Endothelial cell of umbilical vein (primary cell): ENCODE measurements at regions of chr19 and their contacts with region 1.

Region 1: DNA sequence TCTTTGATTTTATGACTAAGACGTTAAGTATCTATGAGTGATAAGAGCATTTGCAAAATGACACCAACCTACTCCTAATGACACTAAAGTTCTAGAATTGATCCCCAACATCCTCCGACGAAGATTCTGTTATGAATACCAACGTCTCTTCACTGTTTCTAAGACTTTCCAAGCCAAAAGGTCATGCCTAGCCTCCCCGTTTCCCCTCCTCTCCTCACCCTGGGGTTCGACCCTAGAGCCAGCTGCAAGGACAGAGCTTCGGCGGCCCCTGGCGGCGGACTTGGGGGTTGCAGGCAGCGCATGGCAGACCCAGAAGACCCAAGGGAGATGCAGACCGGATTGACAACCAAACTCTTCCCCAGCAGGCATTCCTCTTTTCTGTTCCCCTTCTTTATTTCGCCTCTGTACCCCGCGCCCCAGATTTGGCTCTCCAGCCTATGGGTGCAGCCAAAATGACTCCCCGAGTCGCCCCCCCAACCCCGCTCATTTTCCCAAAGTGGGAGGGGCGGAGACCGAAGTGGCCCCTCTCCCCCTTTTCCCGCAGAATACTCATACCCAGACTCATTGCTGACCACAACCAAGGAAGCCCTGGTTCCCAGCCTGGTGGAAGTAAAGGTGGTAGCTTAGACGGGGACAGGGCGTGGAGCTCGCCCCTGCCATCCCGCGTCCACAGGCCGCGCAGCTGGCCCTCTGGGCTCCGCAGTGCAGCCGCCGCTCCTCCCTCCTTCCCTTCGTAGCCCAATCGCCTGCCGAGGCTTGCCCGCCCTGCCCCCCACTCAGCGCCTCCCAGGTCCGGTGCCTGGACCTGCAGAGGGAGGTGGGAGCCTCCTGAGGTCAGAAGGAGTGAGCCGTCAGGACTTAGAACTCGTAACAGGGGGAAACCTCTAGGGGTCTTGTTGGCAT is 4.1 kb upstream of the EML2 start:
- DNase-seq: peak; percentile 85
- H3K4me3 ChIP-seq: peak overlapping the region in 1 of 3 experiments; percentile 13
- H3K27ac ChIP-seq: peak overlapping the region; percentile 9
- H3K4me1 ChIP-seq: peaks cover 42% of the 10 kb centered on the region
- H3K27me3 ChIP-seq: no peaks in the 10 kb centered on the region
- CTCF ChIP-seq: peak; percentile 98 to 99
- POLR2A ChIP-seq: no peak

Region 2: DNA sequence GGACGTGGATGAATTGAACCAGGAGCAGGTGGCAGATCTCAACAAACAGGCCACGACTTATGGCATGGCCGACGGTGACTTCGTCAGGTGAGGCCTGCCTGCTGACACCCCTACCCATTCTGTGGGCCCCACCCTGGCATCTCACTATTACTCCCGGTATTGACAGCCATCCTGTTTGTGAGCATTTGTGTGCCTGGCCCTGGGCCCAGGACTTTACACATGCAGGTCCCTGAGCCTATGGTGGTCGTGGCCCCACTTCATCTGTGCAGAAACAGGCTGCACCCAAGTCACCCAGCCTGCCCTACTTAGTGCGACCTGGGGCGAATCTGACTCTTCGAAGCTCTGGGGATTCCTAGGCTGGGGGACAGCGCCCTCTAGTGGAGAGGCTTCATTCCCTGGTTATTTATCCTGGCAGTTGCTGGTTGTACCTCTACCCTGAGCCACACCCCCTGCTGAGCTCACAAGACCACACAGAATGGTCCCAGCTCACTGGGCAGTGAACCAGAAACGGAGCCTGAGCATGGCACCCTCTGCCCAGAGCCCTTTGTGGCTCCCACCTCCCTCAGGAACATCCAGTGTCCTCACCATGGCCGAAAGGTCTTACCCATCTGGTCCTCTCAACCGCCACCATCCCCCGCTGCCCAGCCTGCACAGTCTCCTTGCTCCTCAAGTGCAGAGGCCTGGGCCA is 583.9 kb before region 1 on chr19:
- CTCF ChIA-PET with region 1: no interaction called
- POLR2A ChIA-PET with region 1: no interaction called
- dilution Hi-C with region 1: no loop called
- intact Hi-C with region 1: no loop called
- DNase-seq: peak; percentile 75
- H3K4me3 ChIP-seq: no peak overlapping the region
- H3K27ac ChIP-seq: no peak overlapping the region
- H3K4me1 ChIP-seq: no peaks in the 10 kb centered on the region
- H3K27me3 ChIP-seq: no peaks in the 10 kb centered on the region
- CTCF ChIP-seq: peak; percentile 80 to 84
- POLR2A ChIP-seq: peak; percentile 31

Region 3: DNA sequence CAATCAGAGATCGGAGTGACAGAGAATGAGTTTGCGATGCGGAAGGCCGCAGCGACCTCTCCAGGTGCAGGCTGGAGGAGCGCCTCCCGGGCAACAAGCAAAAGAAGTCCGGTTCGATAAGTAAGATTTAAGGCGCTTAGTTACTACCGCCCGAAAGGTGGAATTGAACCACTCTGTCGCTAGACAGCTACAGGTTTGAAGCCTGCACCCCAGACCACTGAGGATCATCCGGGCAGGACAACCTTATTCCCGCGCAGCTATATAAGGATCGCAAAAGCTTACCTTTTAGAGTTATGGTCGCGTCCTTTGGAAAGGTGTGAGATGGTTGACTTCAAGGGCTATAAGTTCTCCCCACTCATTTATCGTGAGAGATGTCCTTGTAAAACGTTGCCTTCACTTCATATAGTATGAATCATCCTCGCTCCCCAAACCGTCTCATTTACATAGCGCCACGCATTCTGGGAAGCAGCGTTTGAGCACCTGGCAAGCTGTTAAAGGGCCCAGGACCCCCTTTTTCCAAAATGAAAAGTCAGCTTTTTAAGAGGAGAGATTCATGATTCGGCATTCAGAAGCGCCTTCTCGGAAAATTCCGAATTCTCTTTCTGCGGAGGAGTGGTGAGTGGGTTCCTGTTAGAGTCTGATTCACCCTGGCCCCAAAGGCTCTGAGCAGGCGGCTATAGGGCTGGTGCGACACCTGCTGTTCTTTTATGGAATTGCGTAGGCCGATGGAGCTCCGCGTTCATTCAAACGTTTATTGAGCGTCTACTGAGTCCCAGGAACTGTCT is 164.6 kb before region 1 on chr19:
- CTCF ChIA-PET with region 1: interaction called, 34 read pairs
- POLR2A ChIA-PET with region 1: no interaction called
- dilution Hi-C with region 1: no loop called
- intact Hi-C with region 1: no loop called
- DNase-seq: peak; percentile 92
- H3K4me3 ChIP-seq: peak overlapping the region; percentile 13 to 71 (median 46)
- H3K27ac ChIP-seq: peak overlapping the region; percentile 96
- H3K4me1 ChIP-seq: peaks cover 3% of the 10 kb centered on the region
- H3K27me3 ChIP-seq: no peaks in the 10 kb centered on the region
- CTCF ChIP-seq: peak; percentile 91 to 95
- POLR2A ChIP-seq: no peak

Region 4: GRCh38 chr19:45515081-45515624 is 128.1 kb before region 1 on chr19:
- CTCF ChIA-PET with region 1: interaction called, 13 read pairs
- POLR2A ChIA-PET with region 1: no interaction called
- dilution Hi-C with region 1: no loop called
- intact Hi-C with region 1: no loop called
- DNase-seq: no peak
- H3K4me3 ChIP-seq: no peak overlapping the region
- H3K27ac ChIP-seq: peak overlapping the region; percentile 23
- H3K4me1 ChIP-seq: peaks cover 24% of the 10 kb centered on the region
- H3K27me3 ChIP-seq: no peaks in the 10 kb centered on the region
- CTCF ChIP-seq: no peak
- POLR2A ChIP-seq: no peak

Region 5: DNA sequence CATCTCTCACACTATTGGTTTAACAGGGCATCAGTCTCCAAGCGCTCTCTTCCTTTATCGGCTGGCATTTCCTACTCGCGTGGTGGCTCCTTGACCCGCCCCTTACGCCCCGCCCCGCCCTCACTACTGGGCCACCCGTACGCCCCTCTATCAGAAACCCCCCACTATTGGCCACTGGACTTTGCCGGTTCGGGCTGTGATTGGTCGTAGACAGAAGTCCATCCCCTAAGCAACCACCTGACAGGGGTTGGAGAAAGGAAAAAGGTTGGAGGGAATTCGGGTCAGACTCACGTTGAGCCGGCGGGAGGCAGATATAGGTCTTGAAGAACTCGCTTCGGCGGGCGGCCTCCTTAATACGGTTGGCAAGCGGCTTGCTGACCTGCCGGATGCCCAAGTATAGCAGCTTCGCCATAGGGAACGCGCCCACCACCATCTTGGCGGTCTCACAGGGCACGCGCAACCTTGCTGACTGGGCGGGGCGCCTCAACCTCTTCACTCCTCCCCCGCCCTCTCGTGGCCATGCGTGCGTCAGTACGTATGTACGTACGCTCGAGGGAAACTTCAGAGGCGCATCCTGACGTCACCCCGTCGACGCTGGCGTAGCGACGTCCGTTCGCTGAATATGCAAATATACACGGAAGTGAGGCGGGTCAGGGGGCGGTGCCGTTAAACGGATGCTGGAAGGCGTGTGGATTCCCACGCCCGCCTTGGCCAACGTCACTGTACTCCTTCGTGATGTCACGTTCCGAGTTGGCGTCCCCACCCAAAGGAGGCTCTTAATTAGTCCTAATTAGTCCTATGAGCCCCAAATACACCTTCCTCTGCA is 58.7 kb before region 1 on chr19 and contains the start of gene OPA3:
- CTCF ChIA-PET with region 1: interaction called, 20 read pairs
- POLR2A ChIA-PET with region 1: interaction called, 3 read pairs
- dilution Hi-C with region 1: no loop called
- intact Hi-C with region 1: loop called (anchors 2 kb)
- DNase-seq: peak; percentile 100
- H3K4me3 ChIP-seq: peak within 1 kb of the TSS; percentile 56 to 90 (median 67)
- H3K27ac ChIP-seq: peak within 1 kb of the TSS; percentile 85
- H3K4me1 ChIP-seq: peaks cover 20% of the 10 kb centered on the region
- H3K27me3 ChIP-seq: no peaks in the 10 kb centered on the region
- CTCF ChIP-seq: no peak
- POLR2A ChIP-seq: peak; percentile 90
- total RNA-seq, gene OPA3: 13.8 and 15.4 TPM in 2 replicates

Region 6: GRCh38 chr19:45615795-45616708 is 27.2 kb before region 1 on chr19:
- CTCF ChIA-PET with region 1: interaction called, 91 read pairs
- POLR2A ChIA-PET with region 1: interaction called, 5 read pairs
- dilution Hi-C with region 1: no loop called
- intact Hi-C with region 1: loop called (anchors 1 kb)
- DNase-seq: peak; percentile 99
- H3K4me3 ChIP-seq: peak overlapping the region; percentile 37 to 61 (median 52)
- H3K27ac ChIP-seq: peak overlapping the region; percentile 72
- H3K4me1 ChIP-seq: peaks cover 17% of the 10 kb centered on the region
- H3K27me3 ChIP-seq: no peaks in the 10 kb centered on the region
- CTCF ChIP-seq: no peak
- POLR2A ChIP-seq: peak; percentile 66

Region 7: DNA sequence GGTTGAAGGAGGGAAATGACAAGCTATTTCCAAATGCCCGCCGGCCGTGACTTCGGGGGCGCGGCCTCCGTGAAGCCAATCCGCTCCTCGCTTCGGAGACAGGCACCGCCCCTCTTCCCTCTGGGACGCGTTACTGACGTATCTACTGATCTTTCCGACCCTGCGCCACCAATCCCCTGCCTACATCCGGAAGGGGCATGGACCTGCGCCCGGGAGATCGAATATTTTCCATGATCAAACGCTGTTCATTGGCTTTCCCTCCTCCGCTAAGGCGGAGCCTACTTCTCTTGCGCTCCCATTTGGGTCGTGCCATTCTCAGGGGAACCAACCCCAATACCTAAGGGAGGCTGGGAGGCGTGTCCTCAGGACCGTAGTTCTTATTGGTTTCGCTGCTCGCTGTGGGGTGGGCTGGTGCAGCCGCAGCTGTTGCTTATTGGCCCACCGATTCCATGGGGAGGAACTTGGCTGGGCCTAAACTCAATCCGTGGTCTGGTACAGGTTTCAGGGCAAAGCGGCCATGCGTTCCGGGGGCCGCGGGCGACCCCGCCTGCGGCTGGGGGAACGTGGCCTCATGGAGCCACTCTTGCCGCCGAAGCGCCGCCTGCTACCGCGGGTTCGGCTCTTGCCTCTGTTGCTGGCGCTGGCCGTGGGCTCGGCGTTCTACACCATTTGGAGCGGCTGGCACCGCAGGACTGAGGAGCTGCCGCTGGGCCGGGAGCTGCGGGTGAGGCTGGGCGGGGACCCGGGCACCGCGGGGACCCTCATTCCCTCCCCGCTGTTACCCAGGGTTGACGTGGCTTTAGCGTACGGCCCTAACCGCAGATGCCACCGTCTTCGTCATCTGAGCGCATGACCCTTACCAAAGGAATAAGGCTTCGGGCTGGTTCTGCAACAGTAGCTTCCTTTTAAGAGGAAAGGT is 49.2 kb after region 1 on chr19 and contains the start of gene QPCTL:
- CTCF ChIA-PET with region 1: interaction called, 3 read pairs
- POLR2A ChIA-PET with region 1: no interaction called
- dilution Hi-C with region 1: no loop called
- intact Hi-C with region 1: loop called (anchors 5 kb)
- DNase-seq: peak; percentile 100
- H3K4me3 ChIP-seq: peak within 1 kb of the TSS; percentile 70 to 93 (median 85)
- H3K27ac ChIP-seq: peak within 1 kb of the TSS; percentile 82
- H3K4me1 ChIP-seq: peaks cover 9% of the 10 kb centered on the region
- H3K27me3 ChIP-seq: no peaks in the 10 kb centered on the region
- CTCF ChIP-seq: no peak
- POLR2A ChIP-seq: peak; percentile 76
- total RNA-seq, gene QPCTL: 15.3 and 17.6 TPM in 2 replicates

Region 8: DNA sequence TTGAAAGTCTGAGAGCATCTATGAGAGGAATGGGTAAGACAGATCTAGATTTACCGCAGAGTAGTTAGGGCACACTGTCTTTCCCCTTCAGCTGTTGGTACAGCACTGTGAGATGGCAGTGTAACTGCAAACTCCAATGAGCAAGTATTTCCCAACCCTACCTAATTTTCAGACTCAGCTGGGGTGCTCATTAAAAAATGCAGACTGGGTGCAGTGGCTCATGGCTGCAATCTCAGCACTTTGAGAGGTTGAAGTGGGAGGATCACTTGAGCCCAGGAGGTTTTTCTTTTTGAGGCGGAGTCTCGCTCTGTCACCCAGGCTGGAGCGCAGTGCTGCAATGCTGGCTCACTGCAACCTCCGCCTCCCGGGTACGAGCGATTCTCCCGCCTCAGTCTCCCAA is 61.8 kb after region 1 on chr19:
- CTCF ChIA-PET with region 1: no interaction called
- POLR2A ChIA-PET with region 1: no interaction called
- dilution Hi-C with region 1: no loop called
- intact Hi-C with region 1: no loop called
- DNase-seq: no peak
- H3K4me3 ChIP-seq: no peak overlapping the region
- H3K27ac ChIP-seq: no peak overlapping the region
- H3K4me1 ChIP-seq: no peaks in the 10 kb centered on the region
- H3K27me3 ChIP-seq: no peaks in the 10 kb centered on the region
- CTCF ChIP-seq: no peak
- POLR2A ChIP-seq: no peak